ENCODE measurements at regions of chr12 and their contacts with region 1.

Region 1: DNA sequence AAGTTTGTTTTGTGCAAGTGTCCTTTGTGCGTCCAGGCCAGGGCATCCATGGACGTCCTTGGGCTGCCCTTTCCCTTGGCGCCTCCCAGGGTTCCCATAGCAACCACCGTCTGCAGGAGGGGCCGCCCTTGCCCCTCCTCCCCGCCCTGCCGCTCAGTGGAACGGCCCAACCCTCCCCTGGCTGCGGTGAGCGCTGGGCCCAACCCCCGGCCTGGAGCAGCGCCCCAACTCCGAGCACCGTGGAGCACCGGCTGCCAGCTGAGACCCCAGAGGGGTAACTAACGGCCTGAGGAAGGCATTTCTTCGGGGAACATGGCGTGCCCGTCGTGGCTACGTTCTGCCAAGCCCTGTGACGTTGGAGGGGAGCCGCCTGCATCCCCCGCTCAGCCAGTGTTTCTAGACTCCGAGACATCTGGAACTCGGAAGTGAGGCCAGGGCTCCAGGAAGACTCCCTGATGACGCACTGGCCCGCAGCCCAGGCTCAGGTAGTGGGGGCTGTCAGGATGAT is 5.3 kb upstream of the ACACB start:
- DNase-seq: peak; percentile 84
- H3K4me3 ChIP-seq: peak overlapping the region; percentile 31 to 56 (median 38)
- H3K27ac ChIP-seq: peak overlapping the region; percentile 80
- H3K4me1 ChIP-seq: peaks cover 12% of the 10 kb centered on the region
- H3K27me3 ChIP-seq: no peaks in the 10 kb centered on the region
- CTCF ChIP-seq: no peak
- POLR2A ChIP-seq: peak; percentile 37

Region 2: DNA sequence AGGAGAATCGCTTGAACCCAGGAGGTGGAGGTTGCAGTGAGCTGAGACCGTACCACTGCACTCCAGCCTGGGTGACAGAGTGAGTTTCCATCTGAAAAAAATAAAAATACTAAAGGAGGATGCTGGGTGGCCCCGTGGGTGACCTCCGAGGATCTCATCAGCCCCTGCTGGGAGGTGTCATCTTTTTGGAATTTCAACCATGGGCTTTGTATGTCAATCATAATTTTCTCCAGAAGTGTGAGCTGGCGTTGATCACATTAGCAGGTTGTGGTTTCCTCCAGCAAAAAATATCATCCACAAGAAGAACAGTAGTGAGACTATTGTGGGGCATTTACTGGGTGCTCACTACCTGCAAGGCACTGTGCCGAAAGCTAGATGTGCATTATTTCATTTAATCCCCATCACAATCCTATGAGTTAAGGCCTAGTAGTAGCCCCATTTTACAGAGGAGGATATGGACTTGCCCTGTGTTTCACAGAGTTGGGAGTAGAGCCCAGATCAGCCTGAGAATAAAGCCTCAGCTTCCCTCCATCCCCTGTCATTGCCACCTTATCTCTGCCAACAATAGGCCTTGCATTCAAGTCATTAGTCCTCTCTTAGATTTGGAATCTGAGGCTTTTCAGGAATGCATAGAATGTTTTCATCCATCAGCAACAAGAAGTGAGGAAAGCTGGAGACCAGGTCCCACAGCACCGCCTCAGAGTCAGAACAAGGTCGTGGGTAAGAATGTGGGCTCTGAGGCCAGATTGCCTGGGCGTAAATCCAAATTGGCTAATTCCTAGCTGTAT is 130.0 kb before region 1 on chr12:
- CTCF ChIA-PET with region 1: no interaction called
- POLR2A ChIA-PET with region 1: no interaction called
- dilution Hi-C with region 1: no loop called
- intact Hi-C with region 1: no loop called
- DNase-seq: no peak
- H3K4me3 ChIP-seq: no peak overlapping the region
- H3K27ac ChIP-seq: no peak overlapping the region
- H3K4me1 ChIP-seq: no peaks in the 10 kb centered on the region
- H3K27me3 ChIP-seq: no peaks in the 10 kb centered on the region
- CTCF ChIP-seq: no peak
- POLR2A ChIP-seq: no peak

Region 3: DNA sequence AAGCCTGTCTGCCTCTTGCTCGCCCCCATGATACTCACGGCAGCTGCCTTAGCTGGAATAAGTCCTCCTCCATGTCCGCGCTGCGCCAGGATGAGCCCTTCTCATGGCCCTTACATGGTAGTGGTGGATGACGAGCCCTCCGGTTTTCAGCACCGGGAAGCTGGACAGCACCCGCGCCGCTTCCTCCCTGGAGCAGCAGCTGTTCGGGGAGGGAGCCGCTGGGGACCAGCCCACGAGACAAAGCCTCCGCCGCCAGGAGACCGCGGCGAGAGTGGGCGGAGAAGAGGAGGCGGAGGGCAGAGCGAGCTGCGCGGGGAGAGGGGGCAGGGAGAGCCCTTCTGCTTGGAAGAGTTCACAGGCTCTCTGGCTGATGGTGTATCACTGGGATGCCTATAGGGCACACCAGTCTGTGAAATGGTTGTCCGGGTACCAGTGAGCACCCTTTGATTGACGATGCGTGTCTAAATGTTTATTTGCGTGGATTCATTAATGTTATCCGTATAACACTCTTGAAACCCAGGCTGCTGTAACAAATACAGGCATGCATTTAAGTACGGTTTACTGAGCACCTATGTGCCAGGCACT is 90.2 kb before region 1 on chr12 and contains the start of gene SVOP:
- CTCF ChIA-PET with region 1: no interaction called
- POLR2A ChIA-PET with region 1: no interaction called
- dilution Hi-C with region 1: no loop called
- intact Hi-C with region 1: loop called (anchors 1 kb)
- DNase-seq: peak; percentile 75
- H3K4me3 ChIP-seq: no peak within 1 kb of the TSS
- H3K27ac ChIP-seq: no peak within 1 kb of the TSS
- H3K4me1 ChIP-seq: no peaks in the 10 kb centered on the region
- H3K27me3 ChIP-seq: no peaks in the 10 kb centered on the region
- CTCF ChIP-seq: no peak
- POLR2A ChIP-seq: no peak
- total RNA-seq, gene SVOP: not detected in 2 replicates

Region 4: GRCh38 chr12:109093022-109093918 is 17.8 kb before region 1 on chr12 and contains the start of gene ALKBH2:
- CTCF ChIA-PET with region 1: interaction called, 38 read pairs
- POLR2A ChIA-PET with region 1: no interaction called
- dilution Hi-C with region 1: no loop called
- intact Hi-C with region 1: loop called (anchors 1 kb)
- DNase-seq: peak; percentile 89
- H3K4me3 ChIP-seq: peak within 1 kb of the TSS in 2 of 3 experiments; percentile 33 to 41
- H3K27ac ChIP-seq: peak within 1 kb of the TSS; percentile 43
- H3K4me1 ChIP-seq: peaks cover 7% of the 10 kb centered on the region
- H3K27me3 ChIP-seq: no peaks in the 10 kb centered on the region
- CTCF ChIP-seq: peak; percentile 99 to 100
- POLR2A ChIP-seq: peak; percentile 67
- total RNA-seq, gene ALKBH2: 5.4 TPM in 2 replicates

Region 5: GRCh38 chr12:109134186-109134917 is 23.3 kb after region 1 on chr12:
- CTCF ChIA-PET with region 1: interaction called, 11 read pairs
- POLR2A ChIA-PET with region 1: no interaction called
- dilution Hi-C with region 1: no loop called
- intact Hi-C with region 1: no loop called
- DNase-seq: no peak
- H3K4me3 ChIP-seq: no peak overlapping the region
- H3K27ac ChIP-seq: no peak overlapping the region
- H3K4me1 ChIP-seq: no peaks in the 10 kb centered on the region
- H3K27me3 ChIP-seq: no peaks in the 10 kb centered on the region
- CTCF ChIP-seq: peak; percentile 45 to 63
- POLR2A ChIP-seq: no peak

Region 6: GRCh38 chr12:109154451-109155438 is 43.7 kb after region 1 on chr12:
- CTCF ChIA-PET with region 1: interaction called, 15 read pairs
- POLR2A ChIA-PET with region 1: no interaction called
- dilution Hi-C with region 1: no loop called
- intact Hi-C with region 1: no loop called
- DNase-seq: peak; percentile 57
- H3K4me3 ChIP-seq: peak overlapping the region; percentile 2 to 55 (median 47)
- H3K27ac ChIP-seq: no peak overlapping the region
- H3K4me1 ChIP-seq: no peaks in the 10 kb centered on the region
- H3K27me3 ChIP-seq: peaks cover 0 to 3% of the 10 kb centered on the region in 2 experiments
- CTCF ChIP-seq: no peak
- POLR2A ChIP-seq: no peak

Region 7: GRCh38 chr12:109264095-109264942 is 153.3 kb after region 1 on chr12:
- CTCF ChIA-PET with region 1: interaction called, 14 read pairs
- POLR2A ChIA-PET with region 1: no interaction called
- dilution Hi-C with region 1: no loop called
- intact Hi-C with region 1: loop called (anchors 5 kb)
- DNase-seq: peak; percentile 40
- H3K4me3 ChIP-seq: no peak overlapping the region
- H3K27ac ChIP-seq: no peak overlapping the region
- H3K4me1 ChIP-seq: no peaks in the 10 kb centered on the region
- H3K27me3 ChIP-seq: no peaks in the 10 kb centered on the region
- CTCF ChIP-seq: peak; percentile 86 to 91
- POLR2A ChIP-seq: no peak

Region 8: DNA sequence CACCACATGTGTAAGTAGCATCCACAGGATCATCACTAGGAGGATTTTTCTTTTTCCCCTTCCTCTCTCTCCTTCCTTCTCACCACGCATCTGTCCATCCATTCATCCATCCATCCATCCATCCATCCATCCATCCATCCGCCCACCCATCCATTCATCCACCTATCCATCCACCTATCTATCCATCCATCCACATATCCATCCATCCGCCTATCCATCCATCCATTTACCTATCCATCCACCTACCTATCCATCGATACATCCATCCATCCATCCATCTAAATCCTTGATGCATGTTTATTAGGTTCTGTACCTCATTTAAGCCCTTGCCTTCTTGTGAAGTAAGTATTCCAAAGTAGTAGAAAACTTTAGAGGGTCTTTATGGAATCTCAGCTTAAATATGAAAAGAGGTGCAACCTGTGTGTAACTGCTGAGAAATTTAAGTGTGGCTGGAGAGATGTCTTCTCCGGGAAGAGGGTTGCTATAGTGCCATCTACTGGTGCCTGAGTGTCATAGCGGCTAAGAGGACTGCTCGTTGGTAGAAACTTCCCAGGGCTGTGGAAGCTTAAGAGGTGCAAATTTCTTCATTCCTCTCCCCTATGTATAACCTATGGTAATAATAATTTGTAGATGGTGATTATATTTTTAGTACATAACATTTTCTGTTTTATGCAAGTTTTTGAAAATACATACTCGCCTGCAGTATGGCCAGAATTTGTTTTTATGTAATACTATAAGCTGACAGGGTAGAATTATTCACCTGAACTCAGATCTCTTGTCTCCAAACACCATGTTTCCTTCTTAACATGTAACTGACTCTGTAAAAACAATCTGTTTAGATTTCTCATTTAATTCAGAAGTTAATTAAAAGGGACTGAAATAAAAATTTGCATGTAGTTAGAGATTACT is 282.6 kb after region 1 on chr12:
- CTCF ChIA-PET with region 1: interaction called, 46 read pairs
- POLR2A ChIA-PET with region 1: no interaction called
- dilution Hi-C with region 1: no loop called
- intact Hi-C with region 1: no loop called
- DNase-seq: peak; percentile 63
- H3K4me3 ChIP-seq: no peak overlapping the region
- H3K27ac ChIP-seq: no peak overlapping the region
- H3K4me1 ChIP-seq: no peaks in the 10 kb centered on the region
- H3K27me3 ChIP-seq: no peaks in the 10 kb centered on the region
- CTCF ChIP-seq: peak; percentile 86 to 91
- POLR2A ChIP-seq: no peak